IMR-90 (cell line): ENCODE measurements at regions of chr17 and their contacts with region 1.

Region 1: GRCh38 chr17:20103454-20104446 is 94.6 kb downstream of the SPECC1 start:
- DNase-seq: no peak
- ATAC-seq: no peak; the same call in 1 of the 2 replicates
- H3K4me3 ChIP-seq: no peak overlapping the region
- H3K27ac ChIP-seq: no peak overlapping the region
- H3K4me1 ChIP-seq: no peaks in the 10 kb centered on the region
- H3K27me3 ChIP-seq: peaks cover 44% of the 10 kb centered on the region
- CTCF ChIP-seq: no peak
- POLR2A ChIP-seq: no peak
- RAD21 ChIP-seq: no peak

Region 2: GRCh38 chr17:20009302-20010098 is 94.2 kb before region 1 on chr17 and contains the start of gene SPECC1:
- CTCF ChIA-PET with region 1: interaction called, 3 read pairs
- POLR2A ChIA-PET with region 1: no interaction called
- dilution Hi-C with region 1: no loop called
- in situ Hi-C with region 1: no loop called
- intact Hi-C with region 1: loop called (anchors 5 kb)
- DNase-seq: peak; percentile 43
- ATAC-seq: peak; percentile 99
- H3K4me3 ChIP-seq: peak within 1 kb of the TSS; percentile 51
- H3K27ac ChIP-seq: no peak within 1 kb of the TSS
- H3K4me1 ChIP-seq: no peaks in the 10 kb centered on the region
- H3K27me3 ChIP-seq: peaks cover 36% of the 10 kb centered on the region
- CTCF ChIP-seq: peak; percentile 96
- POLR2A ChIP-seq: no peak
- RAD21 ChIP-seq: peak; percentile 53
- total RNA-seq, gene SPECC1: 26.2 and 35.3 TPM in 2 replicates

Region 3: DNA sequence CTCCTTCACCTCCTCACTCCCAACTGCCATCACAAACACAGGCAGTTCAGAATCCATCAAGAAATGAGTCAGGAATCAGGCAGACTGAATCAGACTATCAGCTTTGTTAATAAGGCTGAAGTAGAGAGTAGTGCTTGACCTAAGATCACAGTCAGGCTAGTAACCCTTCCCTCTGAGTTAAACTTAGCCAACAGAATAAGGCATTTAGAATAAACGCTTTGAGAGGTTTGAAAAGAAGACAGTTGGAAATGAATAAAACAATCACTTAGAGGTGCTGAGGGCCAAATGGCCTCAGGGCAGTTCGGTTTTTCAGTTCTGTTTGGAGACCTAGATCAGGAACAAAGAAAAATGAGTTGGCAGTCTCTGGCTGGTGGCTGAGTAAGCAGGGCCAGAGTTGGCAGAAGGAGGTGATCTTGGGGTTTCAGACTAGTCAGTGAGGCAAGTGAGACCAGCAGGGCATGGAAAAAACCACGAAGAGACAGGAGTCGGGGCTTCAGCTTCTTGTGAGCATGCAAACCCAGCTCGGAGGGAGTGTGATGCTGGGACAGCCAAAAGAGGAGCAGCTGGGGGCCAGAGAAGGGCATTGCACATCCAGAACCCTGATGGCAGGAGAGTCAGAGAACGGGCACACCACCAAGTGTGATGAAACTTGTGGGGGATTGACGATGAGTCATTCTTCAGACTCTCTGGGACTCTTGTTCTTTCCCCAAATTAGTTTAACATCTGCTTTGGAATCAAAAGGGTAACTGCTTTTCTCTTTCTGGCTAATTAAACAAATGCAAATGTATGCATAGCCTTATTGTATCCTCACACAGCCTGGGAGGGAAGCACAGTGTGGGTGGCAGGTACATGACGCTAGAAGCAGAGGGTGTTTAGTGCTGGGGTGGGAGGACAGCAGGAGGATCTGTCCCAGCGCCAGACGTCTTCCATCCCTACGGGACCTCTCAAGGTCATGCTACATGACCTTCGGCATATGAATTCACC is 39.8 kb before region 1 on chr17:
- CTCF ChIA-PET with region 1: no interaction called
- POLR2A ChIA-PET with region 1: no interaction called
- dilution Hi-C with region 1: no loop called
- in situ Hi-C with region 1: no loop called
- intact Hi-C with region 1: no loop called
- DNase-seq: peak; percentile 87
- ATAC-seq: peak; percentile 72
- H3K4me3 ChIP-seq: no peak overlapping the region
- H3K27ac ChIP-seq: peak overlapping the region; percentile 63; the same call in 1 of the 2 replicates
- H3K4me1 ChIP-seq: peaks cover 7% of the 10 kb centered on the region
- H3K27me3 ChIP-seq: no peaks in the 10 kb centered on the region
- CTCF ChIP-seq: no peak
- POLR2A ChIP-seq: no peak
- RAD21 ChIP-seq: no peak

Region 4: DNA sequence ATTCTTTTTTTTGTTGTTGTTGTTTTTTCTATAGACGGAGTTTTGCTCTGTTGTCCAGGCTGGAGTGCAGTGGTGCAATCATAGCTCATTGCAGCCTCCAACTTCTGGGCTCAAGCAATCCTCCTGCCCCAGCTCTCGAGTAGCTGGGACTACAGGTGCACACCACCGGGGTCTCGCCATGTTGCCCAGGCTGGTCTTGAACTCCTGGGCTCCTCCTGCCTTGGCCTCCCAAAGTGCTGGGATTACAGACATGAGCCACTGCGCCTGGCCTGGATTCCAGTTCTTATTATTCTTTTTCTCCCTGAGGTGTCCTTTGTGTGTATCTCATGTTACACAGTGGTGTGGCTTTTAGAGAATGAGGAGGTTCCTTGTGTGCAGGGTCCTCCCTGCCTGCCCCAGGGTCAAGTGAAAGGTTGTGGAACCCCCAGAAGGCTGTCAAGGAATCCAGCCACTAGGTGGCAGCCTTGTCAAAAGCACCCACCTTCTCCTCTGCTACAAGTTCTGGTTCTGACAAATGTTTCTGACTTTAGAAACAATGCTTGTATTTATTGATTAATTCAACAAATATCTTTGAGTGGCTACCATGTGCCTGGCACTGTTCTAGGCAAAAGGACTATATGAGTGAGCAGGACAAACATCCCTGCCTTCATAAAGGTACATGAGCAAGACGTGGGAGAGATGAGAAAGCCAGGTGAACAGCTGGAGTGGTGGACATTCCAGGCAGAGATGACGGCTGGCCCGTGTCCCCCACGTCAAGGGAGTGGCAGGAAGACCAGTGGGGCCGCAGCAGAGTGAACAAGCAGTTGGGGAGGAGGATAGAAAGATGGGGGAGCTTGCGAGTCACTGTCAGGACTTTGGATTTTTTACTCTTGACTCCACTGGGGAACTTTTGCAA is 17.9 kb after region 1 on chr17:
- CTCF ChIA-PET with region 1: no interaction called
- POLR2A ChIA-PET with region 1: no interaction called
- dilution Hi-C with region 1: no loop called
- in situ Hi-C with region 1: no loop called
- intact Hi-C with region 1: no loop called
- DNase-seq: peak; percentile 62
- ATAC-seq: peak; percentile 79
- H3K4me3 ChIP-seq: no peak overlapping the region
- H3K27ac ChIP-seq: no peak overlapping the region
- H3K4me1 ChIP-seq: peaks cover 5% of the 10 kb centered on the region
- H3K27me3 ChIP-seq: no peaks in the 10 kb centered on the region
- CTCF ChIP-seq: peak; percentile 92
- POLR2A ChIP-seq: 0 out of 2 replicates have a peak, but pooled peaks have one; percentile 44
- RAD21 ChIP-seq: peak; percentile 94

Region 5: GRCh38 chr17:20944014-20944865 is 840.5 kb after region 1 on chr17:
- CTCF ChIA-PET with region 1: no interaction called
- POLR2A ChIA-PET with region 1: no interaction called
- dilution Hi-C with region 1: no loop called
- in situ Hi-C with region 1: no loop called
- intact Hi-C with region 1: no loop called
- DNase-seq: no peak
- ATAC-seq: no peak
- H3K4me3 ChIP-seq: no peak overlapping the region
- H3K27ac ChIP-seq: no peak overlapping the region
- H3K4me1 ChIP-seq: no peaks in the 10 kb centered on the region
- H3K27me3 ChIP-seq: peaks cover 41% of the 10 kb centered on the region
- CTCF ChIP-seq: no peak
- POLR2A ChIP-seq: no peak
- RAD21 ChIP-seq: no peak